ENCODE measurements at regions of chr1 and their contacts with region 1.

Region 1: DNA sequence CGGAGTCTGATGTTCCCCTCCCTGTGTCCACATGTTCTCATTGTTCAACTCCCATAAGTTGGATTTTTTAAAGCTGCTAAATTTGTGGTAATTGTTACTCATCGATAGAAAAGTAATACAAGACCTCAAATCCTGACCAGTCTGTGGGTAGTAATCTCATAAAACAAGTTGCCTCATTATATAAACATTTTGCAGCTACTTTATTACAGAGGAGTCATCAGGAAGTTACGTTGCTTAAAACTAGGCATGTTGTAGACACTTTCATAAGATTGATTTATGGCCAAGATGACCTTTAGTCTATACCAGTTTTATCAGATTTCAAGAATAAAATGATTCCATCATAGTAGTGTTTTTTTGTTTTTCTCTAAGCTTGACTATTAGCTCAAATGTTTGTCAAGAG is 208.8 kb downstream of the GIPC2 start:
- DNase-seq: peak; percentile 96
- ATAC-seq: peak; percentile 89
- H3K4me3 ChIP-seq: peak overlapping the region; percentile 14; the same call in 1 of the 2 replicates
- H3K27ac ChIP-seq: peak overlapping the region; percentile 98
- H3K4me1 ChIP-seq: peaks cover 33% of the 10 kb centered on the region
- H3K27me3 ChIP-seq: no peaks in the 10 kb centered on the region
- CTCF ChIP-seq: no peak

Region 2: GRCh38 chr1:78145105-78145580 is 109.4 kb before region 1 on chr1:
- CTCF ChIA-PET with region 1: no interaction called
- POLR2A ChIA-PET with region 1: no interaction called
- intact Hi-C with region 1: loop called (anchors 1 kb)
- DNase-seq: peak; percentile 85
- ATAC-seq: peak; percentile 74
- H3K4me3 ChIP-seq: no peak overlapping the region
- H3K27ac ChIP-seq: peak overlapping the region; percentile 61
- H3K4me1 ChIP-seq: peaks cover 35% of the 10 kb centered on the region
- H3K27me3 ChIP-seq: no peaks in the 10 kb centered on the region
- CTCF ChIP-seq: peak; percentile 97

Region 3: GRCh38 chr1:78214334-78214733 is 40.2 kb before region 1 on chr1:
- CTCF ChIA-PET with region 1: no interaction called
- POLR2A ChIA-PET with region 1: no interaction called
- intact Hi-C with region 1: no loop called
- DNase-seq: peak; percentile 18
- ATAC-seq: no peak
- H3K4me3 ChIP-seq: no peak overlapping the region
- H3K27ac ChIP-seq: peak overlapping the region; percentile 49
- H3K4me1 ChIP-seq: peaks cover 15% of the 10 kb centered on the region
- H3K27me3 ChIP-seq: no peaks in the 10 kb centered on the region
- CTCF ChIP-seq: no peak

Region 4: GRCh38 chr1:78237364-78237916 is 17.1 kb before region 1 on chr1:
- CTCF ChIA-PET with region 1: interaction called, 5 read pairs
- POLR2A ChIA-PET with region 1: interaction called, 19 read pairs
- intact Hi-C with region 1: loop called (anchors 1 kb)
- DNase-seq: peak; percentile 98
- ATAC-seq: peak; percentile 97
- H3K4me3 ChIP-seq: no peak overlapping the region
- H3K27ac ChIP-seq: peak overlapping the region; percentile 89
- H3K4me1 ChIP-seq: peaks cover 38% of the 10 kb centered on the region
- H3K27me3 ChIP-seq: no peaks in the 10 kb centered on the region
- CTCF ChIP-seq: no peak

Region 5: DNA sequence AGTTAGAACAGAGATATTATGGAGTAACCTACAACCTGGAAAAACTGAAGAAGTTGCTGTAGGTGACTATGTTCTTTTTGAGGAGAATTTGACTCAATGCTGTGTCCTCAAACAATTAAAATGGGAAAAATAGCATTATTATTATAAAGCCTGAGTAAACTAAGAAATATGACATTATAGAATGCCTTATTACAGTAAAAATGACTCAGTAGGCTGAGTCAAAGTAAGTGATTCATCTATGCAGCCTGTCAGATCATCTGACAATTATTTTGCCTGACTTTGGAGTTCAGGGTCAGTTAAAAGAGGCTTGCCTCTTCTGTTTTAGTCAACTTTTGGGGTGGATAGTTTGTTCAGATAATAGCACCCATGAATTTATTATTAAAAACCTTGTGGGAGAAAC is 85.5 kb after region 1 on chr1:
- CTCF ChIA-PET with region 1: no interaction called
- POLR2A ChIA-PET with region 1: no interaction called
- intact Hi-C with region 1: loop called (anchors 1 kb)
- DNase-seq: peak; percentile 90
- ATAC-seq: peak; percentile 93
- H3K4me3 ChIP-seq: peak overlapping the region; percentile 17; the same call in 1 of the 2 replicates
- H3K27ac ChIP-seq: peak overlapping the region; percentile 98
- H3K4me1 ChIP-seq: peaks cover 24% of the 10 kb centered on the region
- H3K27me3 ChIP-seq: no peaks in the 10 kb centered on the region
- CTCF ChIP-seq: no peak

Region 6: GRCh38 chr1:78607334-78607927 is 352.9 kb after region 1 on chr1:
- CTCF ChIA-PET with region 1: no interaction called
- POLR2A ChIA-PET with region 1: no interaction called
- intact Hi-C with region 1: loop called (anchors 1 kb)
- DNase-seq: peak; percentile 69
- ATAC-seq: peak; percentile 64
- H3K4me3 ChIP-seq: no peak overlapping the region
- H3K27ac ChIP-seq: peak overlapping the region; percentile 57
- H3K4me1 ChIP-seq: peaks cover 22% of the 10 kb centered on the region
- H3K27me3 ChIP-seq: no peaks in the 10 kb centered on the region
- CTCF ChIP-seq: peak; percentile 78